ENCODE measurements at regions of chr11 and their contacts with region 1.

Region 1: GRCh38 chr11:45964911-45965389 is 42.5 kb downstream of the LARGE2 start:
- DNase-seq: peak; percentile 72
- H3K4me3 Mint-ChIP-seq: no peak overlapping the region
- H3K27ac Mint-ChIP-seq: no peak overlapping the region
- H3K4me1 Mint-ChIP-seq: no peaks in the 10 kb centered on the region
- H3K27me3 Mint-ChIP-seq: no peaks in the 10 kb centered on the region

Region 2: GRCh38 chr11:45949992-45950407 is 14.9 kb before region 1 on chr11:
- CTCF ChIA-PET with region 1: interaction called, 23 read pairs
- intact Hi-C with region 1: no loop called
- DNase-seq: no peak
- H3K4me3 Mint-ChIP-seq: no peak overlapping the region
- H3K27ac Mint-ChIP-seq: no peak overlapping the region
- H3K4me1 Mint-ChIP-seq: no peaks in the 10 kb centered on the region
- H3K27me3 Mint-ChIP-seq: no peaks in the 10 kb centered on the region

Region 3: GRCh38 chr11:45982656-45983470 is 17.9 kb after region 1 on chr11:
- CTCF ChIA-PET with region 1: interaction called, 26 read pairs
- intact Hi-C with region 1: no loop called
- DNase-seq: peak; percentile 73
- H3K4me3 Mint-ChIP-seq: peak overlapping the region; percentile 13
- H3K27ac Mint-ChIP-seq: peak overlapping the region; percentile 70
- H3K4me1 Mint-ChIP-seq: peaks cover 32% of the 10 kb centered on the region
- H3K27me3 Mint-ChIP-seq: no peaks in the 10 kb centered on the region

Region 4: DNA sequence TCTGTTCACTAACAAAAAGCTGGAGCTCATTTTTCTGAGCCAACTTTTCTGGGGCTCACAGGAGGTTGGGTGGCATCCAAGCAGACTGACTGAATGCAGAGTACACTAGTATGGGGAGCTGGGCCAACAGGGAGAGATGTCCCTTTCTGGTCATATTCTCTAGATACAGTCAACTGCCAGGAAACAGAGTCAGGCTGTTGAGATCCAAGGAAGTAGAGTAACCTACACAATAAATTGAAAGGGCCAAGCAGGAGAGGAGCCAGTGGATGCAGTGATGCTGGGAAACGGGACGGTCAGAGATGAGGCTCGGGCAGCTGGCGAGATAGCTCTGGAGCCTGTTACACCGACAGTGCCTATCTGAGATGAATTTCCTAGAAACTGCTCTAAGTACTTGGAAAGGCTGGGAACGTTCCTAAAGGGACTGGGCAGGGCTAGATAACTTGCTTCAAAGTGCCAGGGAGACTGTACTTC is 28.6 kb after region 1 on chr11:
- CTCF ChIA-PET with region 1: interaction called, 49 read pairs
- intact Hi-C with region 1: no loop called
- DNase-seq: no peak
- H3K4me3 Mint-ChIP-seq: no peak overlapping the region
- H3K27ac Mint-ChIP-seq: no peak overlapping the region
- H3K4me1 Mint-ChIP-seq: peaks cover 7% of the 10 kb centered on the region
- H3K27me3 Mint-ChIP-seq: no peaks in the 10 kb centered on the region

Region 5: GRCh38 chr11:46006418-46007070 is 41.6 kb after region 1 on chr11:
- CTCF ChIA-PET with region 1: interaction called, 109 read pairs
- intact Hi-C with region 1: loop called (anchors 1 kb)
- DNase-seq: peak; percentile 14
- H3K4me3 Mint-ChIP-seq: no peak overlapping the region
- H3K27ac Mint-ChIP-seq: no peak overlapping the region
- H3K4me1 Mint-ChIP-seq: no peaks in the 10 kb centered on the region
- H3K27me3 Mint-ChIP-seq: no peaks in the 10 kb centered on the region